ENCODE measurements at regions of chr9 and their contacts with region 1.

Region 1: DNA sequence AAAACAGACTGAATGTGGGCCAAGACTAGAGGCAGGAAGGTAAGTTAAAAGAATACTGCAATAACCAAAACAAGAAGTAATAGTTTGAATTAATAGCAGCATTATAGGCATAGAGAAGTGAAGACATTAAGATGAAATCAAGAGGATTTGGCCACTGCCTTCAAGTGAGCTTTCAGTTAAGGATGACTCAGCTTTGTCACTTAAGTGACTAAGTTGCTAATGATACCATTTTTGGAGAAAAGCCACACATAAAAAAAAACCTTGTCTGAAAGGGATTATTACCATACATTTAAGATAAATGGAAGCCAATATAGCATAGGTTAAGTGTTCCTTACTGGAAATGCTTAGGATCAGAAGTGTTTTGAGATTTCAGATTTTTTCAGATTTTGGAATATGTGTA is 57.0 kb downstream of the ECPAS start:
- DNase-seq: no peak
- ATAC-seq: no peak
- H3K4me3 ChIP-seq: no peak overlapping the region
- H3K4me3 Mint-ChIP-seq: no peak overlapping the region
- H3K27ac ChIP-seq: no peak overlapping the region
- H3K27ac Mint-ChIP-seq: peak overlapping the region in 1 of 9 donors; percentile 47
- H3K4me1 ChIP-seq: no peaks in the 10 kb centered on the region
- H3K4me1 Mint-ChIP-seq: peaks cover 0 to 13% (median 0%) of the 10 kb centered on the region in 7 donors
- H3K27me3 ChIP-seq: no peaks in the 10 kb centered on the region
- H3K27me3 Mint-ChIP-seq: no peaks in the 10 kb centered on the region

Region 2: DNA sequence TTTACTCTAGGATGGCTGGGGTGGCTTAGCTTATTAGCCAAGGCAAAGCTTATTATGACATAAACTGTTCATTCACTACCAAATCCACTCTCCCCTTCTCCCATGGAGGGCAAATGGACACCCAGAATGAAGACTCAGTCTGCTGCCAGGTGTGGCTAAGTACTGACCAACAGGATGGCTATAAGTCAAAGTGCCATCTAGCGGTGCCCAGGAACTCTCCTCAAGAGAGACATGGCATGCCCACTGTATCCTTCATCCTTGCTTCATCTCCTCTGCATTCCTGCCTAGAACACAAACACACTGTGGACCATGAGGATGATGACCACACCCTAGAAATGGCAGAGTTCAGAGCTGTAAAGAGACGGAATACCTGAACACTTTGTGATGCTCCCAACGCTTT is 57.3 kb before region 1 on chr9:
- CTCF ChIA-PET with region 1: no interaction called
- POLR2A ChIA-PET with region 1: no interaction called
- intact Hi-C with region 1: no loop called
- DNase-seq: no peak
- ATAC-seq: no peak
- H3K4me3 ChIP-seq: no peak overlapping the region
- H3K4me3 Mint-ChIP-seq: no peak overlapping the region
- H3K27ac ChIP-seq: no peak overlapping the region
- H3K27ac Mint-ChIP-seq: no peak overlapping the region
- H3K4me1 ChIP-seq: no peaks in the 10 kb centered on the region
- H3K4me1 Mint-ChIP-seq: no peaks in the 10 kb centered on the region
- H3K27me3 ChIP-seq: no peaks in the 10 kb centered on the region
- H3K27me3 Mint-ChIP-seq: no peaks in the 10 kb centered on the region

Region 3: GRCh38 chr9:111525056-111525977 is 98.1 kb after region 1 on chr9 and contains the start of gene ZNF483:
- CTCF ChIA-PET with region 1: no interaction called
- POLR2A ChIA-PET with region 1: no interaction called
- intact Hi-C with region 1: loop called in 1 of 2 experiments (anchors 5 kb)
- DNase-seq: peak; percentile 60 to 89 (median 75)
- ATAC-seq: peak; percentile 90
- H3K4me3 ChIP-seq: peak within 1 kb of the TSS; percentile 84
- H3K4me3 Mint-ChIP-seq: peak within 1 kb of the TSS; percentile 86 to 98 (median 92)
- H3K27ac ChIP-seq: peak within 1 kb of the TSS; percentile 86
- H3K27ac Mint-ChIP-seq: peak within 1 kb of the TSS; percentile 90 to 99 (median 96)
- H3K4me1 ChIP-seq: peaks cover 4 to 6% of the 10 kb centered on the region in 2 donors
- H3K4me1 Mint-ChIP-seq: peaks cover 16 to 31% (median 21%) of the 10 kb centered on the region in 7 donors
- H3K27me3 ChIP-seq: no peaks in the 10 kb centered on the region
- H3K27me3 Mint-ChIP-seq: peaks cover 0 to 15% (median 5%) of the 10 kb centered on the region in 5 donors
- total RNA-seq, gene ZNF483: 3.0 to 37.1 (median 16.0) TPM

Region 4: GRCh38 chr9:111572950-111573604 is 145.9 kb after region 1 on chr9:
- CTCF ChIA-PET with region 1: no interaction called
- POLR2A ChIA-PET with region 1: no interaction called
- intact Hi-C with region 1: no loop called
- DNase-seq: no peak
- ATAC-seq: no peak
- H3K4me3 ChIP-seq: no peak overlapping the region
- H3K4me3 Mint-ChIP-seq: no peak overlapping the region
- H3K27ac ChIP-seq: no peak overlapping the region
- H3K27ac Mint-ChIP-seq: no peak overlapping the region
- H3K4me1 ChIP-seq: no peaks in the 10 kb centered on the region
- H3K4me1 Mint-ChIP-seq: no peaks in the 10 kb centered on the region
- H3K27me3 ChIP-seq: no peaks in the 10 kb centered on the region
- H3K27me3 Mint-ChIP-seq: peaks cover 2 to 15% (median 7%) of the 10 kb centered on the region in 5 donors

Measured in naive thymus-derived CD4-positive, alpha-beta T cell (primary cell).